Heart left ventricle (tissue), 16 donors: ENCODE measurements at regions of chr1 and their contacts with region 1.

Region 1: DNA sequence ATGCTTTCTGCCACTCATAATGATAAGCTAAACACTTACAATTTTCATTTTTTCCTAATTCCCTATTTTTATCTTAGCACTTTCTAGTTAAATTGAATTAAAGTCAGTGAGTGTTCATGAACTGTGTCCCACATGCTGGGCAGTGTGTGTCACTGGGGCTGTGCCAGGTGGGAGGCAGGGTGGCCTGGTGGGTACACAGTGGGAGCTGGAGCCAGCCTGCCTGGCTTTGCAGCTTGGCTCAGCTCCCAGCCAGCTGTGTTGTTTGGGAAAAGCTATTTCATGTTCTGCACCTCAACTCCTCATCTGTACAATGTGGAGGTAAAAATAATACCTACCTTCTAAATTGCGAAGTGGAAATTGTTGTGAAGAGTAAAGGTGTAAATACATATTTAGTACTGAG is 238.4 kb downstream of the PLA2G4A start:
- DNase-seq: peak in 3 of 5 donors; percentile 15 to 54 (median 24)
- ATAC-seq: peak in 2 of 4 donors; percentile 48 to 57
- H3K4me3 ChIP-seq: no peak overlapping the region
- H3K27ac ChIP-seq: no peak overlapping the region
- H3K4me1 ChIP-seq: no peaks in the 10 kb centered on the region
- H3K27me3 ChIP-seq: no peaks in the 10 kb centered on the region
- CTCF ChIP-seq: no peak
- POLR2A ChIP-seq: no peak

Region 2: GRCh38 chr1:186849271-186849671 is 217.9 kb before region 1 on chr1:
- intact Hi-C with region 1: no loop called
- DNase-seq: no peak
- ATAC-seq: peak in 3 of 4 donors; percentile 52 to 67 (median 57)
- H3K4me3 ChIP-seq: no peak overlapping the region
- H3K27ac ChIP-seq: peak overlapping the region in 2 of 12 donors; percentile 36 to 81
- H3K4me1 ChIP-seq: peaks cover 0 to 41% (median 0%) of the 10 kb centered on the region in 12 donors
- H3K27me3 ChIP-seq: no peaks in the 10 kb centered on the region
- CTCF ChIP-seq: no peak
- POLR2A ChIP-seq: no peak

Region 3: DNA sequence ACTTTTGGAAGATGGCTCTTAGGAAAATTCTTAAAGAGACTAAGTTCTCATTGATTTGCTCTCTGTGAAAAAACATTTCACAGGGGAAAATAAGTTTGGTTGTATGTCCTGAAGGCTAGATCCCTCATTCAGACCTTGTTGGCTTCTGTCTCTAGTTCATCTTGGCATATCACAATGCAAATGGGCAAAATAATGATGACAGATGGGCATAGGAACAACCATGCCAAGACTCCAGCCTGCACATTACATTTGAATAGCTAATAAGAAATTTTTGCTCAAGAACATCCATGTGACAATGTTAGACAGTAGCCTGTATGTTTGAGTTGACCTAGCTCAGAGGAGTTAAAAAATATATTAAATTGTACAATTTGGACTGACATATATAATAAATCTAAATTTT is 54.5 kb after region 1 on chr1:
- intact Hi-C with region 1: loop called in 1 of 10 experiments (anchors 10 kb)
- DNase-seq: no peak
- ATAC-seq: no peak
- H3K4me3 ChIP-seq: no peak overlapping the region
- H3K27ac ChIP-seq: no peak overlapping the region
- H3K4me1 ChIP-seq: no peaks in the 10 kb centered on the region
- H3K27me3 ChIP-seq: no peaks in the 10 kb centered on the region
- CTCF ChIP-seq: no peak
- POLR2A ChIP-seq: no peak